Endothelial cell of umbilical vein (primary cell): ENCODE measurements at regions of chr17 and their contacts with region 1.

Region 1: GRCh38 chr17:43428524-43428923 is 29.7 kb downstream of the ARL4D start:
- DNase-seq: no peak
- H3K4me3 ChIP-seq: no peak overlapping the region
- H3K27ac ChIP-seq: no peak overlapping the region
- H3K4me1 ChIP-seq: peaks cover 4% of the 10 kb centered on the region
- H3K27me3 ChIP-seq: peaks cover 5 to 10% of the 10 kb centered on the region in 2 experiments
- CTCF ChIP-seq: peak in 1 of 2 donors; percentile 12
- POLR2A ChIP-seq: no peak

Region 2: GRCh38 chr17:43393944-43394482 is 34.5 kb before region 1 on chr17:
- CTCF ChIA-PET with region 1: interaction called, 7 read pairs
- POLR2A ChIA-PET with region 1: interaction called, 9 read pairs
- dilution Hi-C with region 1: no loop called
- intact Hi-C with region 1: loop called (anchors 1 kb)
- DNase-seq: peak; percentile 80
- H3K4me3 ChIP-seq: no peak overlapping the region
- H3K27ac ChIP-seq: no peak overlapping the region
- H3K4me1 ChIP-seq: peaks cover 8% of the 10 kb centered on the region
- H3K27me3 ChIP-seq: no peaks in the 10 kb centered on the region
- CTCF ChIP-seq: peak; percentile 80 to 85
- POLR2A ChIP-seq: no peak